Activated CD8-positive, alpha-beta T cell treated with anti-CD3 and anti-CD28 coated beads, Interleukin-2, amount 10 ng/mL, durations not matched to agents 7 days and 5 days (primary cell): ENCODE measurements at regions of chr22 and their contacts with region 1.

Region 1: DNA sequence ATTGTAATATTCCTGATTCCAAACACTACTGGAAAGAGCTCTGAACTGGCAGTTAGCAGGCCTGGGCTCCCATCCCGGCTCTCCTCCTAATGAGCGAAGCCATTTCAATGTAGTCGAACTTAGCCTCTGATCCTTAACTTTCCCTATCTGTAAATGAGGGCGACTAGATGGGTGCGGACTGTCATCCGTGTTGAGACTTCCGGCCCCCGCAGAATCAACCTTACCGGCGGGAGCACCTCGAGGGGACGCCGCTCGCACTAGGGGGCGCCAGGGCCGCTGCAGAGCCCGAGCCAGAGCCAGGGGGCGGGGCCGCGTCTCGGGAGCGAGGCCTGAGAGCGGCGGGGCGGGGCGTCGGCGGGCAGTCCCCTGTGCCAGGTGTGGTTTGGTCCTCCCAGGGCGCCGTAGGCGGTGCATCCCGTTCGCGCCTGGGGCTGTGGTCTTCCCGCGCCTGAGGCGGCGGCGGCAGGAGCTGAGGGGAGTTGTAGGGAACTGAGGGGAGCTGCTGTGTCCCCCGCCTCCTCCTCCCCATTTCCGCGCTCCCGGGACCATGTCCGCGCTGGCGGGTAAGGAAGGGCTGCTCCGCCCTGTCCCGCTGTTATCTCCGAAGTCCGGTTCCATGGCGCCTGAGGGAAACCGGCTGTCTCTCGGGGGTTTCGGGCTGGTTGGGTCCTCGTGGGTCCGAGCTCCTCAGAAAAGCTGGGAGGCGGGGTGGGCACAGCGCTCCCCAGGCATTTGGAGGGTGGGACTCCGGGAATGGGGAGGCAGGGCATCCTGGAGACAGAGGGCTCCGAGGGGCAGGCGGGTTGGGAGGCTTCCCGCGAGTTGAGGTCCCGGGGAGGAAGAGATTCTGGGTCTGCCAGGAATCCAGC is at the start of gene LIMK2:
- DNase-seq: peak; percentile 98
- ATAC-seq: peak; percentile 99
- H3K4me3 Mint-ChIP-seq: peak within 1 kb of the TSS; percentile 87
- H3K27ac Mint-ChIP-seq: peak within 1 kb of the TSS; percentile 90
- H3K4me1 Mint-ChIP-seq: peaks cover 45% of the 10 kb centered on the region
- H3K27me3 Mint-ChIP-seq: no peaks in the 10 kb centered on the region
- total RNA-seq, gene LIMK2: 42.7 to 44.3 TPM

Region 2: GRCh38 chr22:31160328-31160978 is 51.6 kb before region 1 on chr22:
- CTCF ChIA-PET with region 1: interaction called, 13 read pairs
- POLR2A ChIA-PET with region 1: no interaction called
- DNase-seq: peak; percentile 23
- ATAC-seq: peak; percentile 57
- H3K4me3 Mint-ChIP-seq: peak overlapping the region; percentile 100
- H3K27ac Mint-ChIP-seq: peak overlapping the region; percentile 97
- H3K4me1 Mint-ChIP-seq: peaks cover 32% of the 10 kb centered on the region
- H3K27me3 Mint-ChIP-seq: peaks cover 5% of the 10 kb centered on the region

Region 3: DNA sequence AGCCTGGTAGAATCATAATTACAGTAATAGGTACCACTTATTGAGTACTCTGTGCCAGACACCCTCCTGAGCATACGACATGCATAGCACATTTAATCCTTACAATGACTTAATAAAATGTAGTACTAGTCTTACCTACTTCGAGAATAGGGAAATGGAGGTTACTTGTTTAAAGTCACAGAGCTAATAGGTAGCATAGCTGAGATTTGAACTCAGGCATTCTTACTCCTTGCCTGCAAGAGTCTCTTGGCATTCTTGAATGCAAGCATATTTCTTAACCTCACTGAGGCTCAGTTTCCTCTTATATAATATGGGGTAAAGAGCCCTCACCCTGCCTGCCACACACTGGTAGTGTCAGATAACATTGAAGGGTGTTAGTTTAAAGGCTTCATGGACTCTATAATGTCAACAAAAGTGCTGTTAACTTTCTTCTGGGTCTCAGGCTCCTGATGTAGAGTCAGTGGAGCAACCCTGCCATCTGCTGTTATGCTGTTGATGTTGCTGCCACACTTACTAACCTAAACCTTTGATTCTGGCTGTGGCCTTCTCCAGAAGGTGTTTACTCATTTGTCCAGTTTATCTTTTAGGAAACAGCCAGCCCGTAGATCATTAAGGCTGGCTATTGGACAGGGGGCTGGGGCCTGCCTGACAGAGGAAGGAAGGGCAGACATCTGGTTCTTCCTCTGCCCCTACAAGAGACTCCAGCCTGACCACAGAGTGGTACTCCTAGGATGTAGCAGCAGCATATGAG is 18.9 kb after region 1 on chr22:
- CTCF ChIA-PET with region 1: interaction called, 117 read pairs
- POLR2A ChIA-PET with region 1: interaction called, 9 read pairs
- DNase-seq: peak; percentile 63
- ATAC-seq: peak; percentile 68
- H3K4me3 Mint-ChIP-seq: no peak overlapping the region
- H3K27ac Mint-ChIP-seq: no peak overlapping the region
- H3K4me1 Mint-ChIP-seq: peaks cover 56% of the 10 kb centered on the region
- H3K27me3 Mint-ChIP-seq: no peaks in the 10 kb centered on the region

Region 4: DNA sequence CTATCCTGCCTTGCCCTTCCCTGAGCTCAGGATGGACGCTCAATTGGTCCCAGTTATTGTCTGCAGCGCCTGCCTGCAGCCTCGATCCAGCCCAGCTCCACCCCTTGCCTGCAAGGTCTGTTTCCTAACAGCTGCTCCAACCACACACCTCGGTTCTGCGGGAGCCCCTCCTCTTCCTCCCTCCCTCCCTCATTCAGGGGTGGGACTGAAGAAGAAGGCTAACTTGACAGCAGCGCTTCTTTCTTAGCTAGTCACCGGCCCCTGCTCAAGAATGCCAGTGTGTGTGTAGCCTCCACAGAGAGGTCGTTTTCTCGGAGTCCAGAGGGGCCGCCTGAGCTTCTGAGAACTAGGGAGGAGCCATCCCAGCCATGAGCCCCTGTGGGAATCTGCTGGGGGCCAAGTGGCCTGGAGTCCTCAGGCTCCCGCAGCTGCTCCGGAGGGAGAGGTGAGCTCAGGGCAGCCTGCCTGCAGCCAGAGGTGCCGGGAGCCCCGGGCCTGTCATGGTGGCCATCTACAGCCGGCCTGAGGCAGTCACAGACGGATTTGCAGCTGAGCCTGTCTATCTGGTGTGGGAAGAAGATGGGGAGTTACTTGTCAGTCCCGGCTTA is 36.1 kb after region 1 on chr22:
- CTCF ChIA-PET with region 1: interaction called, 11 read pairs
- POLR2A ChIA-PET with region 1: interaction called, 3 read pairs
- DNase-seq: peak; percentile 89
- ATAC-seq: peak; percentile 100
- H3K4me3 Mint-ChIP-seq: peak overlapping the region; percentile 48
- H3K27ac Mint-ChIP-seq: peak overlapping the region; percentile 77
- H3K4me1 Mint-ChIP-seq: peaks cover 34% of the 10 kb centered on the region
- H3K27me3 Mint-ChIP-seq: no peaks in the 10 kb centered on the region

Region 5: DNA sequence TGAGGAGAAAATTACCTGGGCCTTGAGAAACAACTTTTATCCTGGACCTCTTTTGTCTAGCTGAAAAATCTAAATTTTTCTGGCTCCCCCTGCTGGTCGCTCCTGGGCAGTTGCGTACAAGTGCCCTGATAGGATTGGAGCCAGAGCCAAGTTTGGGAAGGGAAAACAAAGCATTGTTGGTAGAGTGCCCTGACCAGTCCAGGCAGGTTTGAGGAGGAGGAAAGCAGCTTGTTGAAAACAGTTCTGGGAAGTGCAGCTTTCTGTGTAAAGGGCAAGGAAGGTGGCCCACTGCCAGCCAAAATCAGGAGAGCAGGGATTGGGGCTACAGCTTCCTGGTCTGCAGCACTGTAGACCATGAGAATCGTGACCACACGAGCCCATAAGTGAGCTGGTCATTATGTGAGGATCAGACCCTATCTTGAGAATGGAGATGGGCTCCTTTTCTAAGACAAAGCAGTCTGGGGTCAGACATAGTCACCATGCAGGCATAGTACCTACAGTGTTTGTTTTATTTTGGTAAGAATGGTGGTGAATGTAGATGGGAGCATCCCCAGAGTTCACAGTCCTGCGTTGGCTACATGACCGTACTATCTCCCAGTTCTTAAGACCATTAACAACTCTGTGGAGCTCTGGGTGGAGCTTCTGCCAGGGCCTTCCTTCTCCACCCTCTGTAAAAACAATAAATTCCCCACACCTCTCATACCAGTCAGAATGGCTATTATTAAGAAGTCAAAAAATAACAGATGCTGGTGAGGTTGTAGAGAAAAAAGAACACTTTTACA is 101.5 kb after region 1 on chr22:
- CTCF ChIA-PET with region 1: interaction called, 37 read pairs
- POLR2A ChIA-PET with region 1: no interaction called
- DNase-seq: peak; percentile 75
- ATAC-seq: peak; percentile 63
- H3K4me3 Mint-ChIP-seq: no peak overlapping the region
- H3K27ac Mint-ChIP-seq: no peak overlapping the region
- H3K4me1 Mint-ChIP-seq: peaks cover 2% of the 10 kb centered on the region
- H3K27me3 Mint-ChIP-seq: no peaks in the 10 kb centered on the region

Region 6: GRCh38 chr22:31327883-31328696 is 116.0 kb after region 1 on chr22:
- CTCF ChIA-PET with region 1: no interaction called
- POLR2A ChIA-PET with region 1: no interaction called
- DNase-seq: no peak
- ATAC-seq: no peak
- H3K4me3 Mint-ChIP-seq: no peak overlapping the region
- H3K27ac Mint-ChIP-seq: no peak overlapping the region
- H3K4me1 Mint-ChIP-seq: peaks cover 21% of the 10 kb centered on the region
- H3K27me3 Mint-ChIP-seq: no peaks in the 10 kb centered on the region